GM12878 (cell line): ENCODE measurements at regions of chr1 and their contacts with region 1.

Region 1: GRCh38 chr1:84988588-84988987 is 8.3 kb downstream of the MCOLN2 start:
- DNase-seq: no peak
- ATAC-seq: peak; percentile 72
- H3K4me3 ChIP-seq: peak overlapping the region; percentile 62
- H3K27ac ChIP-seq: peak overlapping the region; percentile 77
- H3K4me1 ChIP-seq: peaks cover 23% of the 10 kb centered on the region
- H3K27me3 ChIP-seq: no peaks in the 10 kb centered on the region
- CTCF ChIP-seq: no peak
- EP300 ChIP-seq: peak in 1 of 2 experiments; percentile 47; a peak in 1 of 4 replicates
- POLR2A ChIP-seq: peak; percentile 56; the same call in 1 of the 2 replicates
- RAD21 ChIP-seq: 0 out of 2 replicates have a peak, but pooled peaks have one; percentile 8

Region 2: DNA sequence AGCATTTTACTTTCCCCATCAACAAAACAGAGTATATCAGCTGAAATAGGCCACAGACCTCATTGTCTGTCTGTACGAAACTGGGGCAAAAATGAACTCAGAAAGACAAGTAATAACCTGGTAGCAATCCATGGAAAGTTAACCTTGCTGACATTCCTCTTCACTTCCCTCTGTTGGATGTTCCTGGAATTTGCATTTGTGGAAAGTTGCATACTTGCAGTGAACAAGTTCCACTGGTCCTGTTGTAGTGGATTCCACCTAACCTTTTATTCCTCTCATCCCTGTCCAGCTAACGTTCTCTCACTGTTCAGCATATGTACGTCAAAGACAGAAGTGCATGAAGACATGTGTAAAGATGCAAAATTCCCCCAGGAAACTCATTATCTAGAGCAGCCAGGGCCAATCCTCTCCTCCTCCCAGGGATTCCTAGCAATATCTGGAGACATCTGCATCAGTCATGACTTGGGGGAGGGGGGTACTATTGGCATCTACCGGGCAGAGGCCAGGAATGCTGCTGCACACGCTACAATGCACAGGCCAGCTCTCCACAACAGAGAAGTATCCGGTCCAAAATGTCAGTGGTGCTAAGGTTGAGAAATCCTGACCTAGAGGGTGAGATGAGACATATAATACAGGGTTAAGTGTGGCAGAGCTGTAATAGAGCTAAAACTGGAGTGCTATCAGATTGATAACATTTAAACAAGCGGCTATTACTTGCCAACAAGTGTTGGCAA is 103.8 kb before region 1 on chr1:
- CTCF ChIA-PET with region 1: no interaction called
- POLR2A ChIA-PET with region 1: no interaction called
- RAD21 ChIA-PET with region 1: no interaction called
- SMC1A ChIA-PET with region 1: no interaction called
- in situ Hi-C with region 1: no loop called
- intact Hi-C with region 1: no loop called
- DNase-seq: no peak
- ATAC-seq: no peak
- H3K4me3 ChIP-seq: no peak overlapping the region
- H3K27ac ChIP-seq: no peak overlapping the region
- H3K4me1 ChIP-seq: no peaks in the 10 kb centered on the region
- H3K27me3 ChIP-seq: no peaks in the 10 kb centered on the region; a peak in 1 of 4 replicates
- CTCF ChIP-seq: no peak
- EP300 ChIP-seq: no peak
- POLR2A ChIP-seq: no peak
- RAD21 ChIP-seq: no peak

Region 3: GRCh38 chr1:84959294-84959693 is 29.3 kb before region 1 on chr1:
- CTCF ChIA-PET with region 1: interaction called, 4 read pairs
- POLR2A ChIA-PET with region 1: interaction called, 25 read pairs
- RAD21 ChIA-PET with region 1: interaction called, 25 read pairs
- SMC1A ChIA-PET with region 1: interaction called, 41 read pairs
- in situ Hi-C with region 1: no loop called
- intact Hi-C with region 1: no loop called
- DNase-seq: peak; percentile 68
- ATAC-seq: peak; percentile 94
- H3K4me3 ChIP-seq: no peak overlapping the region
- H3K27ac ChIP-seq: peak overlapping the region; percentile 62
- H3K4me1 ChIP-seq: peaks cover 10% of the 10 kb centered on the region
- H3K27me3 ChIP-seq: no peaks in the 10 kb centered on the region
- CTCF ChIP-seq: no peak
- EP300 ChIP-seq: peak; percentile 85 to 91
- POLR2A ChIP-seq: 0 out of 2 replicates have a peak, but pooled peaks have one; percentile 33
- RAD21 ChIP-seq: peak; percentile 21; the same call in 1 of the 2 replicates

Region 4: GRCh38 chr1:84973498-84974334 is 14.9 kb before region 1 on chr1:
- CTCF ChIA-PET with region 1: interaction called, 49 read pairs
- POLR2A ChIA-PET with region 1: interaction called, 69 read pairs
- RAD21 ChIA-PET with region 1: interaction called, 56 read pairs
- SMC1A ChIA-PET with region 1: interaction called, 132 read pairs
- in situ Hi-C with region 1: no loop called
- intact Hi-C with region 1: loop called (anchors 1 kb)
- DNase-seq: no peak
- ATAC-seq: peak; percentile 54
- H3K4me3 ChIP-seq: peak overlapping the region; percentile 60
- H3K27ac ChIP-seq: peak overlapping the region; percentile 85
- H3K4me1 ChIP-seq: peaks cover 56% of the 10 kb centered on the region
- H3K27me3 ChIP-seq: no peaks in the 10 kb centered on the region
- CTCF ChIP-seq: peak in 1 of 3 experiments; percentile 31; a peak in 2 of 6 replicates
- EP300 ChIP-seq: no peak
- POLR2A ChIP-seq: no peak
- RAD21 ChIP-seq: peak; percentile 41; the same call in 1 of the 2 replicates

Region 5: DNA sequence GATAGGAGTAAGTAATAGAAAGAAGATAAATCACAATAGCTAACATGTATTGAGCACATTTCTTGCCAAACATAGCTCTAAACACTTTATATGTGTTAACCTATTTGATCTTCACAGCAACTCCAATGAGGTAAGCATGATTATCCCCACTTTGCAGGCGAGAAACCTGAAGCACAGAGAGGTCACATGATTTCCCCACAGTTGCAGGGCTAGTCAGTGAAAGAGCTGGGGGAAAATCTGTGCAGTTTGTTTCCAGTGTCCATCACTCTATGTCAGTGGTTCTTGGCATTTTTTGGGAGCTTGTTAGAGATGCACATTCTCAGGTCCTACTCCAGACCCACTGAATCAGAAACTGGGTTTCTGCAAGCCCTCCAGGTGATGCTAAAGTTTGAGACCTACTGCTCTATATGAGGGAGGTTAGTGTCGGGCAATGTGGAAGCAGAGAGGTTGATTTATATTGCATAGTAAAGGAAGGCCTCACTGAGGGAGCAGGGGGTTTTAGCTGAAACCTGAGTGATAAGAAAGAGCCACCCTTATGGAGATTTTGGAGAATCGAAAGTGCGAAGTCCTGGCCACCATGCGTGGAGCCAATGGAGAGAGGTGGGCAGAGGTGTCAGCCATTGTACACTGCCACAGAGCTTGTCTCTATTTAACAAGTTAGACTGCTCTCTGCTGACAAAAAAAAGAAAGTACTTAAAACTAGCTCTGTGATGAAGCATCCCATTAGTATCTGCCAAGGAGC is 38.8 kb after region 1 on chr1:
- CTCF ChIA-PET with region 1: interaction called, 12 read pairs
- POLR2A ChIA-PET with region 1: interaction called, 4 read pairs
- RAD21 ChIA-PET with region 1: interaction called, 18 read pairs
- SMC1A ChIA-PET with region 1: interaction called, 12 read pairs
- in situ Hi-C with region 1: no loop called
- intact Hi-C with region 1: no loop called
- DNase-seq: no peak
- ATAC-seq: peak; percentile 96
- H3K4me3 ChIP-seq: no peak overlapping the region
- H3K27ac ChIP-seq: no peak overlapping the region
- H3K4me1 ChIP-seq: no peaks in the 10 kb centered on the region
- H3K27me3 ChIP-seq: no peaks in the 10 kb centered on the region
- CTCF ChIP-seq: peak; percentile 31 to 62 (median 33); a peak in 4 of 6 replicates
- EP300 ChIP-seq: no peak
- POLR2A ChIP-seq: no peak
- RAD21 ChIP-seq: peak; percentile 72

Region 6: GRCh38 chr1:85078903-85079302 is 90.3 kb after region 1 on chr1:
- CTCF ChIA-PET with region 1: no interaction called
- POLR2A ChIA-PET with region 1: no interaction called
- RAD21 ChIA-PET with region 1: no interaction called
- SMC1A ChIA-PET with region 1: no interaction called
- in situ Hi-C with region 1: no loop called
- intact Hi-C with region 1: no loop called
- DNase-seq: no peak
- ATAC-seq: peak; percentile 69
- H3K4me3 ChIP-seq: no peak overlapping the region
- H3K27ac ChIP-seq: no peak overlapping the region
- H3K4me1 ChIP-seq: no peaks in the 10 kb centered on the region
- H3K27me3 ChIP-seq: no peaks in the 10 kb centered on the region
- CTCF ChIP-seq: peak in 2 of 3 experiments; percentile 14 to 31; a peak in 2 of 6 replicates
- EP300 ChIP-seq: no peak
- POLR2A ChIP-seq: no peak
- RAD21 ChIP-seq: peak; percentile 51

Region 7: DNA sequence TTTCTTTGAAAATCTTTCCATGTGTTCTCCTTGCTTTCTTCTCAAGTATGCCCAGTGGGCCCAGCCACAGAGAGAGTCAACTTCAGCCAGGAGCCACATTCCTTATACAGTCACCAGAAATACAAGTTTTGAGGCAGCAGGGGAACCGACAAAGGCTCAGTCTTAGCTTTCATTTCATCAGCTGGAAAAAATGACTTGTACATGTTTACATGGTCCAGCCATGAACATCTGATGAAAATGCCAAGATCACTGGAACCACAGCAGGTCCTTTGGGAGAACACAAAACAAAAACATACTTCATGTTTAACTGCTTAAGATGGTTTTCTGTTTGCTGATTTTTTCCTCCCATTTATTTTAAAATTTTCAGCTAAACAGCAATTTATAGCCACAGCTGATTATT is 139.8 kb after region 1 on chr1:
- CTCF ChIA-PET with region 1: no interaction called
- POLR2A ChIA-PET with region 1: no interaction called
- RAD21 ChIA-PET with region 1: no interaction called
- SMC1A ChIA-PET with region 1: no interaction called
- in situ Hi-C with region 1: no loop called
- intact Hi-C with region 1: no loop called
- DNase-seq: no peak
- ATAC-seq: no peak
- H3K4me3 ChIP-seq: no peak overlapping the region
- H3K27ac ChIP-seq: no peak overlapping the region
- H3K4me1 ChIP-seq: no peaks in the 10 kb centered on the region
- H3K27me3 ChIP-seq: no peaks in the 10 kb centered on the region
- CTCF ChIP-seq: no peak
- EP300 ChIP-seq: no peak
- POLR2A ChIP-seq: no peak
- RAD21 ChIP-seq: no peak

Region 8: DNA sequence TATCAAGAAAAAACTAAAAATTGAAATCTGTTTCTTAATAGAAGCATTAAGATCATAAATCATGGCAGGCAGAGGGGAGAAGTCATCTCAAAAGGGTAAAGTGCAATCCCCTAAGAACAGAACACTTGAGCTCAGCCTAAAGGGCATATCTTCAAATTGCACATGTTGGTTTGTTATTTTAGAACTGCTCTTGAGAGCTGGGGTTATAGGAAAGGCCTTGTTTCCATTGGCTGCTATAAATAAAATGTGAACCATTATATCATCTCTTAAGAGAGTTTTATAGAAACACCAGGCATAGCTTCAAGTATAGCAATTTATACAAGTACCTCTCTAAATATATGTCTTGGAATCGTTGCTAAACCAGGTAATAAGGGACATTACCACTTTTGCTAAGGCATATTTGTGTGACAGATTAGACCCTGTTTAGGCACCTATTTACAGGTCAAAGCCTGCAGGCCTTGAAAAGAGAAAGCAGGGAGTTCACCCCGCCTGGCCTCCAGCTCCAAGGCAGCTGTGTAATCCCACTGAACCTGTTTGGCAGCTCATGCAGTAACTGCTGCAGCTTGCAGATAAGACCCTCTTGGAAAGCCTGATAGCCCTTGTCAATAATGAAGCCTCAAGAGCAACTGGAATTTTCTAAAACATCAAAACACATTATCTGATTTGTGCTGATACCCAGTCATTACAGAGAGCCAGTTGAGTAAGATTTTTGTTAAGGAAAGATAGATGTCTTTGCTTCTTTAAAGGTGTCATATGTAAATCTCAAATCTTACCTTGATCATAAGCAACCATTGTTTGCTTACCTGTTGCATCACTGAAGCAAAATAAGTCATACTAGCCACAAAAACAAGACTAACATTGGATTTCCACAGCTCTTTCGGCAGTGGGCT is 236.4 kb after region 1 on chr1:
- CTCF ChIA-PET with region 1: no interaction called
- POLR2A ChIA-PET with region 1: no interaction called
- RAD21 ChIA-PET with region 1: no interaction called
- SMC1A ChIA-PET with region 1: no interaction called
- in situ Hi-C with region 1: no loop called
- intact Hi-C with region 1: no loop called
- DNase-seq: no peak
- ATAC-seq: no peak
- H3K4me3 ChIP-seq: no peak overlapping the region
- H3K27ac ChIP-seq: no peak overlapping the region
- H3K4me1 ChIP-seq: no peaks in the 10 kb centered on the region
- H3K27me3 ChIP-seq: no peaks in the 10 kb centered on the region
- CTCF ChIP-seq: no peak
- EP300 ChIP-seq: no peak
- POLR2A ChIP-seq: no peak
- RAD21 ChIP-seq: no peak